Esophagus muscularis mucosa (tissue), 4 donors: ENCODE measurements at regions of chr1 and their contacts with region 1.

Region 1: DNA sequence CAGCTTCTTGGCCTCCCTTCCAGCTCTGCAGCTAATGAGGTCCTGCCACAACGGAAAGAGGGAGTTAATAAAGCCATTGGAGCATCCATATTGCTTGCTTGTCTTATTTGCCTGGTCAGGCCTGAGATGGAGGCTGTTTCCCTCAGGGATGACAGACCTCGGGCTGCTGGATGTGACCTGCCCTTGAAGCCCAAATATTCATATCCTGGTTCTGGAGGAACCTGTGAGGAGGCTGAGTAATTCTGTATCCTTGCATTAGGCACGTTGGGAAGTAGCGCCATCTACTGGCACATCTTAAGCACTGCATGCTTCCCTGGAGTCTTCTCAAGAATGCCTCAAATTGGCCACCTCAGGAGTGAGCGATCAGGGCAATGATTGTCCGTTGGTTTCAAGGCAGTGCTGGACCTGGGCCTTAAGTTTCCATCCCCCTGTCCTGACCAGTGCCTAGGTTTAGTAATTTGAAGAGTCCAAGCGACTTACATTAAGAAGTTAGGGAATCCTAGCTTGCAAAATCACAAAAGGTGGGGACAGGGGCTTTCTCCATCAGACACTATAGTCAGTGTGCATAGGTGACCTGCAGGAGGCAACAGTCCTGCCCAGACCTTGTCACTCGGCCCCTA is 13.8 kb upstream of the NASP start:
- DNase-seq: peak; percentile 94
- H3K4me3 ChIP-seq: no peak overlapping the region
- H3K27ac ChIP-seq: peak overlapping the region in 1 of 4 donors; percentile 54
- H3K4me1 ChIP-seq: peaks cover 3 to 13% (median 11%) of the 10 kb centered on the region in 4 donors
- H3K27me3 ChIP-seq: no peaks in the 10 kb centered on the region
- CTCF ChIP-seq: peak; percentile 97 to 100 (median 97)
- EP300 ChIP-seq: no peak
- POLR2A ChIP-seq: no peak

Region 2: DNA sequence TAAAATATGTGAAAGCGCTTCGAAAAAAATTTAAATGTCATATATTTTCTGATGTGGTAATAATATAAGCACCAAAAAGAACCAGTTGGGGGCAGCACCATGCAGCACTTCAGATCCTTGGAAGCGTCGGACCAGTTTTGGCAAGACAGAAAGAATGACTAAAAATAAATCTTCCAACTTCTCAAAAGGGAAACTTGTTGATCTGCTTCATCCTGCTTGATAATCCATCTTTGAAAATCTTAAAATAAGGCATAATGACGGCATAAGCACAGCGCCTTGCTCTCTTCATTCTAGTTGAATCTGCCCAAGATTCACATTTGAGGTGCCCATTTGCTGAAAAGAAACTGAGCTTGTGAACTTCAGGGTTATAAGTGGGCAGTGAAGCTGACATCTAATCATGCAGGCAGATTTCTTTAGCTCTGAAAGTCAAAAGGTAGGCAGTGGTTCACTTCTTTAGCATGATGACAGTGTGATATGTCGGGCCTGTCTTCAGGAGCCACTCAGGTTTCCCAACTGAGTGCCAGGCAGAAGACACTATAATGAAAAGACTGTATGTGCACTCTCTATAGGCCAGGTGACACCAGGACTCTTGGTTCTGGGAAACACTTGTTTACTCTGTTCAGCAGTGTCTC is 210.1 kb before region 1 on chr1:
- intact Hi-C with region 1: loop called (anchors 2 kb)
- DNase-seq: no peak
- H3K4me3 ChIP-seq: peak overlapping the region in 2 of 4 donors; percentile 10 to 15
- H3K27ac ChIP-seq: peak overlapping the region; percentile 58 to 74 (median 70)
- H3K4me1 ChIP-seq: peaks cover 12 to 26% (median 22%) of the 10 kb centered on the region in 4 donors
- H3K27me3 ChIP-seq: no peaks in the 10 kb centered on the region
- CTCF ChIP-seq: peak; percentile 73 to 83 (median 76)
- EP300 ChIP-seq: no peak
- POLR2A ChIP-seq: no peak

Region 3: GRCh38 chr1:45512641-45513054 is 57.4 kb before region 1 on chr1:
- intact Hi-C with region 1: loop called (anchors 5 kb)
- DNase-seq: no peak
- H3K4me3 ChIP-seq: no peak overlapping the region
- H3K27ac ChIP-seq: no peak overlapping the region
- H3K4me1 ChIP-seq: peaks cover 10 to 35% (median 33%) of the 10 kb centered on the region in 4 donors
- H3K27me3 ChIP-seq: no peaks in the 10 kb centered on the region
- CTCF ChIP-seq: peak; percentile 47 to 70 (median 64)
- EP300 ChIP-seq: no peak
- POLR2A ChIP-seq: no peak